Heart left ventricle (tissue), 16 donors: ENCODE measurements at regions of chr9 and their contacts with region 1.

Region 1: DNA sequence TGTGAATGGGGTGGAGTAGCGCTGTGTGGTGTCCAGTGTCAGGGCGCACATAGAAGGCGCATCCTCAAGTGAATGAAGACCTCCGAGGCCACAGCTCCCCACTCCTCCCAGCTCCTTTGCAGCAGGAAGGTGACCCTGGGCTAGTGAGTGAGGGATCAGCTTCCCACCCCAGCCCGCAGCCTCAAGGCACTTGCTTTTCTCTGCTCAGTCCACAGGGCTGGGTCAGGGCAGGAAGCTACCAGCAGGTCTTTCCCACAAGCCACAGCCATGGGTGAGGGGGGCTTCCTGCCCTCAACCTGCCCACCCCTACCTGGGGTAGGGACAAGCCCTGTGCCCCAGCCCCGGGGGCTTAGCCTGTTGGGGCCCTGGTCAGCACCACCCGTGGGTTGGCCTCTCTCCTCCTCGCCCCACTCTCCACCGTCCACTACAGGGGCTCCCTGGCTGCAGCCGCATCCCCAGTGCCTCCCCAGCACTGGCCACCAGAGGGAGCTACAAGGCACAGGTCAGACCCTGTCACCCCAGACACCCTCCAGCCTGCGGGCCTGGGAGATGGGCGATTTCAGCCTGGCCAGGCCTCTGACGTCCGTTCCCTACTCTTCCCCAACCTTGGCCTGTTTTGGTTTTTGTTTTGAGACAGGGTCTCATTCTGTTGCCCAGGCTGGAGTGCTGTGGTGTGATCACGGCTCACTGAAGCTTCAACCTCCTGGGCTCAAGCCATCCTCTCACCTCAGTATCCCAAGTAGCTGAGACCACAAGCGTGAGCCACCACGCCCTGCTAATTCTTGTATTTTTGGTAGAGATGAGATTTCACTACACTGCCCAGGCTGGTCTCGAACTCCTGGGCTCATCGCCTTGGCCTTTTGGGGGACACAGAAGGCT is 1.3 kb upstream of the ABCA2 start:
- DNase-seq: peak; percentile 73 to 91 (median 82)
- ATAC-seq: peak; percentile 28 to 76 (median 70)
- H3K4me3 ChIP-seq: peak overlapping the region in 11 of 12 donors; percentile 45 to 79 (median 67)
- H3K27ac ChIP-seq: peak overlapping the region in 1 of 12 donors; percentile 87
- H3K4me1 ChIP-seq: peaks cover 5 to 68% (median 25%) of the 10 kb centered on the region in 12 donors
- H3K27me3 ChIP-seq: no peaks in the 10 kb centered on the region
- CTCF ChIP-seq: peak; percentile 74 to 96 (median 90)
- POLR2A ChIP-seq: no peak

Region 2: GRCh38 chr9:136885950-136886578 is 143.2 kb before region 1 on chr9 and contains the start of gene TRAF2:
- intact Hi-C with region 1: loop called in 1 of 10 experiments (anchors 10 kb)
- DNase-seq: peak; percentile 98 to 99 (median 99)
- ATAC-seq: peak; percentile 98 to 99 (median 98)
- H3K4me3 ChIP-seq: peak within 1 kb of the TSS; percentile 73 to 93 (median 84)
- H3K27ac ChIP-seq: peak within 1 kb of the TSS in 11 of 12 donors; percentile 73 to 93 (median 87)
- H3K4me1 ChIP-seq: peaks cover 5 to 56% (median 34%) of the 10 kb centered on the region in 12 donors
- H3K27me3 ChIP-seq: no peaks in the 10 kb centered on the region
- CTCF ChIP-seq: no peak
- POLR2A ChIP-seq: peak in 1 of 2 donors; percentile 85
- total RNA-seq, gene TRAF2: 6.3 to 14.7 (median 9.1) TPM

Region 3: DNA sequence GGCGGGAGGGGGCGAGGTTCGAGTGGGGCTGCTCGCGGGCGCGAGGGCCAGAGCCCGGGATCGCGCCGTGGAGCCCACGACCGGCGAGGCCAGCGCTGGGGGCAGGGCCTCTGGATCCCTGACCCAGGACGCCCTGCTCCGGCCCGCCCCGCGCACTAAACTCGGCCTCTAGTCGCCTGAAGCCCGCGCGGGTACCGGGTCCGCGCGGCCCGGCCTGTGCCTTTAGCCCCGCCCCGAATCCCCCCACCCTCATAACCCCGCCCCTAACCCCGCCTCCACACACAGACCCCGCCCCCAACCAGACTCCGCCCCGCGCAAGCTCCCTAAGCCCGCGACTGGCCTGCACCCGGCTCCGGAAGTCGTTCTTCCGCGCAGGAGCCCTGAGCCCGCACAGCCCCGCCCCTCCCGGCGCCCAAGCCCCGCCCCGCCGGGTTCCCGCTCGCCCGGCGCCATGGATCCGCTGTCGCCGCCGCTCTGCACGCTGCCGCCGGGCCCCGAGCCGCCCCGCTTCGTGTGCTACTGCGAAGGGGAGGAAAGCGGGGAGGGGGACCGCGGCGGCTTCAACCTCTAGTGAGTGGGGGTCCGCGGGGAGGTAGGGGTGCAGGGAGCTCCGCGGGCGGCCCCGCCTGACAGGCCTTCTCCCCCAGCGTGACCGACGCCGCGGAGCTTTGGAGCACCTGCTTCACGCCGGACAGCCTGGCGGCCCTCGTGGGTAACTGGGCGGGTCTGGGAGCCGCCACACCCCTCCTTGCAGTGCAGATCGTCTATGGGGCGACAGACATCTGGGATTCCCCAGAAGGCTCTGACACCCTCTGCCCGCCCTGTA is 37.1 kb before region 1 on chr9 and contains the start of gene PAXX:
- intact Hi-C with region 1: loop called in 1 of 10 experiments (anchors 5 kb)
- DNase-seq: peak; percentile 94 to 97 (median 95)
- ATAC-seq: peak; percentile 89 to 94 (median 94)
- H3K4me3 ChIP-seq: peak within 1 kb of the TSS; percentile 60 to 98 (median 82)
- H3K27ac ChIP-seq: peak within 1 kb of the TSS; percentile 8 to 91 (median 87)
- H3K4me1 ChIP-seq: peaks cover 3 to 55% (median 31%) of the 10 kb centered on the region in 12 donors
- H3K27me3 ChIP-seq: peaks cover 0 to 28% (median 0%) of the 10 kb centered on the region in 9 donors
- CTCF ChIP-seq: no peak
- POLR2A ChIP-seq: peak in 1 of 2 donors; percentile 47
- total RNA-seq, gene PAXX: 15.0 to 35.3 (median 19.4) TPM